OCI-LY7 (cell line): ENCODE measurements at regions of chr1 and their contacts with region 1.

Region 1: DNA sequence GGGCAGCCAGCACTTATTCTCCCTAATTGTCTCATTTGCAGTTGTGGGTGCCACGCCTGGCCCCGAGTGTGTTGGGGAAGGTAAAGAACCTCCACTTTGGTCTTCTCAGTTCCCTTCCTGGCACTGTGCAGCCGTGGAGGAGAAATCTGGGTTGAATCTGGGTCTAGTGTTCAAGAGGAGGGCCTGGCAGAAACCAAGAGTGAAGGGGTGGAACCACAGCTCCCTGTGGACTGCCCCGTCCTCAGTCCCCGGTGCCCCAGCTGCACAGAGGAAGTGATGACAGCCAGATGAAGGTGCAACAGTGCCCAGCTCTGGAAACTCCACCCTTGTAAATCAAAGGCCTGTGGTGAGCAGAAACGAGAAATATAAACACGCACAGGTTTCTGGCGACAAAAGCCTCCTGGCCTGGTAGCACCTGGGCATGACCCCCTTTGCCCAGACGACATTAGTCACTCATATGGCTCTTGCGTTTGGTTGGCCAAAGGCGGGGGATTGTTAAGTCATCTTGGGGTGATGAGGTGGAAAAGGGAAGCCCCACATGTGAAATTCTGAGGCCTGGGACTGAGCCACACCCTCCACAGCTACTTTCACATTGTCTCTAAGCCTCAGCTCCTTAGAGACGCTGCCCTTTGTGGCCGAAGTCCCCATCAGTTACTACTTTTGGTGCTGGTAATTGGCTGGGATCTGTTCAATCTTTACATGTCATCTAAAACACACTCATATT is 4.2 kb upstream of the ECE1 start:
- DNase-seq: peak; percentile 92
- H3K4me3 ChIP-seq: peak overlapping the region; percentile 65
- H3K27ac ChIP-seq: peak overlapping the region; percentile 90
- H3K4me1 ChIP-seq: peaks cover 84% of the 10 kb centered on the region
- CTCF ChIP-seq: no peak

Region 2: GRCh38 chr1:21255278-21255942 is 39.0 kb before region 1 on chr1:
- CTCF ChIA-PET with region 1: no interaction called
- POLR2A ChIA-PET with region 1: no interaction called
- intact Hi-C with region 1: loop called (anchors 1 kb)
- DNase-seq: peak; percentile 87
- H3K4me3 ChIP-seq: no peak overlapping the region
- H3K27ac ChIP-seq: no peak overlapping the region
- H3K4me1 ChIP-seq: peaks cover 5% of the 10 kb centered on the region
- CTCF ChIP-seq: peak; percentile 94

Region 3: GRCh38 chr1:21324368-21325141 is 30.1 kb after region 1 on chr1:
- CTCF ChIA-PET with region 1: interaction called, 22 read pairs
- POLR2A ChIA-PET with region 1: interaction called, 26 read pairs
- intact Hi-C with region 1: no loop called
- DNase-seq: peak; percentile 35
- H3K4me3 ChIP-seq: peak overlapping the region; percentile 10
- H3K27ac ChIP-seq: peak overlapping the region; percentile 12
- H3K4me1 ChIP-seq: peaks cover 38% of the 10 kb centered on the region
- CTCF ChIP-seq: no peak

Region 4: GRCh38 chr1:21334214-21335087 is 40.0 kb after region 1 on chr1:
- CTCF ChIA-PET with region 1: interaction called, 5 read pairs
- POLR2A ChIA-PET with region 1: interaction called, 8 read pairs
- intact Hi-C with region 1: loop called (anchors 1 kb)
- DNase-seq: peak; percentile 88
- H3K4me3 ChIP-seq: peak overlapping the region; percentile 64
- H3K27ac ChIP-seq: peak overlapping the region; percentile 69
- H3K4me1 ChIP-seq: peaks cover 58% of the 10 kb centered on the region
- CTCF ChIP-seq: peak; percentile 82